Uterus (tissue), 4 donors: ENCODE measurements at regions of chr12 and their contacts with region 1.

Region 1: DNA sequence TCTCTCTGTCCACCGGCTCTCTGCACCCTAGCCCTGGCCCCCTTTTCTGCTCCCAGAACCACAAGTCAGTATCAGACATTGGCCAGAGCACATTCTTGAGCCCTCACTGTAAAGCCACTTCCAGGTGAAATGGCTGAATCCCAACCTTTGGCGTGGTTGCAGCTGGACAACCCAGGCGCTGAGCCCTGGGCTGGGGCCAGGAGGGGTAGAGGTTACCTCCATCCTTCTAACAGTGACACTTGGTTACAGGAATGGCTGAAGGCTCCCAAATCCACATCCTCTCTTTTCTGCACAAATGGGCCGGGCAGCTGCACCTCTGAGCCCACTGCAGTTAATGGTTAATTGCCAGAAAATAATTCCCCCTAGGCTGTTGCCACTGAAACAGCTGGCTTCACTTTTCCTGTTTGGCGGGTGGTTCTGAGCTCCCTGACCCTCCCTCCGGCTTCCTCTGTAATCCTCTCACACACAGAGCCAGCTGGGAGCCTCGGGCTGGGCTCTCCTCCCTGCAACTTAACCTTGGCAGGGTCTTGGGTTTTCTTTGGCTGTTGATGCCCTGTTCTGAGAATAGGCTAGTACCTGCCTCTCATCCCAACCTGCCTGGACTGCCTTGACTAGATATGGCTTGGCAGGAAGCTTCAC is 44.1 kb downstream of the TSPAN11 start:
- DNase-seq: no peak
- H3K4me3 ChIP-seq: no peak overlapping the region
- H3K27ac ChIP-seq: no peak overlapping the region
- H3K4me1 ChIP-seq: no peaks in the 10 kb centered on the region
- H3K27me3 ChIP-seq: no peaks in the 10 kb centered on the region
- CTCF ChIP-seq: no peak
- POLR2A ChIP-seq: no peak

Region 2: DNA sequence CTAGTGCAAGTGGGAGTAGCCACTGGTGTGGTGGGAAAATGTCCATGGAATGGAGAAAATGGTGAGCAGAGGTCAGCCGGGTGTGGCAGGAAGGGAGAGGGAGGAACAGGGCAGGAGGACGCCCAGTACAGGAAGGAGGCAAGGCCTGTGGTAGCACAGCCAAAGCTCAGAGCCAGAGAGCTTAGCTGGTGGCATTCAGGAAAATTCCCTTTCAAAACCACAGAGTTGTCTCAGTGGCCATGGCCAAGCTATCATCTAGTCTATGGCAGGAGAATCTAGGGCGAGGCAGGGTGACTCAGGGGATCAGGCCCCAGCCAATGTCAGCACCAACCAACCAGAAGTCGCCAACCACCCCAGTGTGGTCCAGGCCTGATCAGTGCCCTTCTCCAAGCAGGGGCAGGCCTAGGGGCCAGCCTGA is 35.3 kb after region 1 on chr12:
- intact Hi-C with region 1: no loop called
- DNase-seq: peak in 1 of 2 donors; percentile 10
- H3K4me3 ChIP-seq: no peak overlapping the region
- H3K27ac ChIP-seq: no peak overlapping the region
- H3K4me1 ChIP-seq: no peaks in the 10 kb centered on the region
- H3K27me3 ChIP-seq: no peaks in the 10 kb centered on the region
- CTCF ChIP-seq: no peak
- POLR2A ChIP-seq: no peak

Region 3: GRCh38 chr12:31353750-31354708 is 383.4 kb after region 1 on chr12:
- intact Hi-C with region 1: loop called (anchors 10 kb)
- DNase-seq: no peak
- H3K4me3 ChIP-seq: no peak overlapping the region
- H3K27ac ChIP-seq: peak overlapping the region; percentile 32 to 52
- H3K4me1 ChIP-seq: no peaks in the 10 kb centered on the region
- H3K27me3 ChIP-seq: no peaks in the 10 kb centered on the region
- CTCF ChIP-seq: no peak
- POLR2A ChIP-seq: no peak